Mucosa of descending colon (tissue), 3 donors: ENCODE measurements at regions of chr3 and their contacts with region 1.

Region 1: GRCh38 chr3:47961815-47962618 is 54.2 kb downstream of the MAP4 start:
- DNase-seq: peak in 1 of 3 donors; percentile 27
- ATAC-seq: peak; percentile 87
- H3K4me3 ChIP-seq: no peak overlapping the region
- H3K4me1 ChIP-seq: peaks cover 6% of the 10 kb centered on the region
- CTCF ChIP-seq: no peak

Region 2: GRCh38 chr3:47556351-47556750 is 405.7 kb before region 1 on chr3:
- intact Hi-C with region 1: loop called in 1 of 2 experiments (anchors 5 kb)
- DNase-seq: no peak
- ATAC-seq: no peak
- H3K4me3 ChIP-seq: no peak overlapping the region
- H3K4me1 ChIP-seq: no peaks in the 10 kb centered on the region
- CTCF ChIP-seq: no peak

Region 3: GRCh38 chr3:48119505-48120193 is 157.6 kb after region 1 on chr3:
- intact Hi-C with region 1: no loop called
- DNase-seq: peak in 2 of 3 donors; percentile 29 to 39
- ATAC-seq: peak; percentile 39
- H3K4me3 ChIP-seq: no peak overlapping the region
- H3K4me1 ChIP-seq: no peaks in the 10 kb centered on the region
- CTCF ChIP-seq: no peak

Region 4: GRCh38 chr3:48306860-48307530 is 345.0 kb after region 1 on chr3:
- intact Hi-C with region 1: no loop called
- DNase-seq: no peak
- ATAC-seq: no peak
- H3K4me3 ChIP-seq: no peak overlapping the region
- H3K4me1 ChIP-seq: no peaks in the 10 kb centered on the region
- CTCF ChIP-seq: no peak